Activated naive CD4-positive, alpha-beta T cell treated with anti-CD3 and anti-CD28 coated beads for 36 hours (primary cell): ENCODE measurements at regions of chr3 and their contacts with region 1.

Region 1: GRCh38 chr3:139935016-139935865 is at the start of gene CLSTN2:
- DNase-seq: peak; percentile 23
- H3K4me3 Mint-ChIP-seq: no peak within 1 kb of the TSS
- H3K27ac Mint-ChIP-seq: no peak within 1 kb of the TSS
- H3K4me1 Mint-ChIP-seq: peaks cover 2% of the 10 kb centered on the region
- H3K27me3 Mint-ChIP-seq: peaks cover 45% of the 10 kb centered on the region
- total RNA-seq, gene CLSTN2: not detected

Region 2: GRCh38 chr3:139540651-139541151 is 394.5 kb before region 1 on chr3:
- CTCF ChIA-PET with region 1: no interaction called
- intact Hi-C with region 1: loop called (anchors 10 kb)
- DNase-seq: no peak
- H3K4me3 Mint-ChIP-seq: no peak overlapping the region
- H3K27ac Mint-ChIP-seq: no peak overlapping the region
- H3K4me1 Mint-ChIP-seq: peaks cover 10% of the 10 kb centered on the region
- H3K27me3 Mint-ChIP-seq: peaks cover 55% of the 10 kb centered on the region

Region 3: DNA sequence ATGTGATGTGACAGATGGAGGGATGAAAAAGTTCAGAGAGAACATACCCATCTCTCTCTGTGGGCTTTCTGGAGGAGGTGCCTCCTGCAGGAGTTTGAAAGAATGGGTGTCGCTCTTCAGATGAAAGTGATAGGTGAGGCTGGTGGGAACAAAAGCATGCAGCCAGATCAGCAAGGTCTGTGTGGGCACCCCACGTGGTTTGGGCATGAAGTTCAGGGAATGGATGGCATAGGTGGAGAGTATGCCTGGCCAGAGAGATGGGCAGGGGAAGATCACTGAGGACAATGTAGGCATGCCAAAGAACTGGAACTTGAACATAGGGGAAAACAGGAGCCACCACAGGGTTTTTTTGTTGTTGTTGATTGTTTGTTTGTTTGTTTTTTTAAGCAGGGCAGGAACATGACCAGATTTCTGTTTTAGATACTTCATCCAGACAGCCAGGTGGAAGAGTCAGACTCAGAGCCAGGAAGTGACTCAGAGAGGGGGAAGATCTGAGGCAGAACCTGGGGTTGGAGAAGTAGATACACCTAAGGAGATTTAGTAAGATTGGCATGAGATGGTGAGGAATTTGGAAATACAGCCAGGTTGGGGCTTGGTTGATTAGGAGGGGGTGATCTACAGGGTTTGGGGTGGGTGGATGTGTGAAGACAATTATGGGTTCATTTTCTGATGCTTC is 65.1 kb before region 1 on chr3:
- CTCF ChIA-PET with region 1: no interaction called
- intact Hi-C with region 1: no loop called
- DNase-seq: no peak
- H3K4me3 Mint-ChIP-seq: no peak overlapping the region
- H3K27ac Mint-ChIP-seq: no peak overlapping the region
- H3K4me1 Mint-ChIP-seq: no peaks in the 10 kb centered on the region
- H3K27me3 Mint-ChIP-seq: peaks cover 11% of the 10 kb centered on the region

Region 4: GRCh38 chr3:140051019-140051957 is 116.0 kb after region 1 on chr3:
- CTCF ChIA-PET with region 1: no interaction called
- intact Hi-C with region 1: loop called (anchors 5 kb)
- DNase-seq: peak; percentile 8
- H3K4me3 Mint-ChIP-seq: no peak overlapping the region
- H3K27ac Mint-ChIP-seq: no peak overlapping the region
- H3K4me1 Mint-ChIP-seq: no peaks in the 10 kb centered on the region
- H3K27me3 Mint-ChIP-seq: peaks cover 7% of the 10 kb centered on the region

Region 5: DNA sequence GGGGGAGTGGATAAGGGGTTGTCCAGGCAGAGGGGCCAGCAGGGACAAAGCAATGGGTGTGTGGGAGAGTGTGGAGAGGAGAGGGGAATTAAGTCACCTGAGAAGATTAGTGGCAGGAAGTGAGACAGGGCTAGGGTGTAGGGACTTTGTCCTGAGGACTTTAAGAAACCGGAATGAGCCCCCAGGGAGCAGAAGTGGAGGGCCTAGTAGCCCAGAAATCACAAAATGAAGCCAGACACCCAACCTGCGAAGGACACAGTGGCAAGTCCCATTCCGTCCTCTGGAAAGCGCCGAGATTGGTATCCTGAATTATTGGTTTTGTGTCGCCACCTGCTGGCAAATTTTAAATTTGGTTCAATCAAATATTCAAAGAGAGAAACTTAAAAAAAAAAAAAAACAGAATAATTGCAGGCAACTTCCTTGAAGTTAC is 928.4 kb after region 1 on chr3:
- CTCF ChIA-PET with region 1: no interaction called
- intact Hi-C with region 1: loop called (anchors 5 kb)
- DNase-seq: peak; percentile 73
- H3K4me3 Mint-ChIP-seq: no peak overlapping the region
- H3K27ac Mint-ChIP-seq: no peak overlapping the region
- H3K4me1 Mint-ChIP-seq: no peaks in the 10 kb centered on the region
- H3K27me3 Mint-ChIP-seq: peaks cover 2% of the 10 kb centered on the region